HCT116 (cell line): ENCODE measurements at regions of chr1 and their contacts with region 1.

Region 1: DNA sequence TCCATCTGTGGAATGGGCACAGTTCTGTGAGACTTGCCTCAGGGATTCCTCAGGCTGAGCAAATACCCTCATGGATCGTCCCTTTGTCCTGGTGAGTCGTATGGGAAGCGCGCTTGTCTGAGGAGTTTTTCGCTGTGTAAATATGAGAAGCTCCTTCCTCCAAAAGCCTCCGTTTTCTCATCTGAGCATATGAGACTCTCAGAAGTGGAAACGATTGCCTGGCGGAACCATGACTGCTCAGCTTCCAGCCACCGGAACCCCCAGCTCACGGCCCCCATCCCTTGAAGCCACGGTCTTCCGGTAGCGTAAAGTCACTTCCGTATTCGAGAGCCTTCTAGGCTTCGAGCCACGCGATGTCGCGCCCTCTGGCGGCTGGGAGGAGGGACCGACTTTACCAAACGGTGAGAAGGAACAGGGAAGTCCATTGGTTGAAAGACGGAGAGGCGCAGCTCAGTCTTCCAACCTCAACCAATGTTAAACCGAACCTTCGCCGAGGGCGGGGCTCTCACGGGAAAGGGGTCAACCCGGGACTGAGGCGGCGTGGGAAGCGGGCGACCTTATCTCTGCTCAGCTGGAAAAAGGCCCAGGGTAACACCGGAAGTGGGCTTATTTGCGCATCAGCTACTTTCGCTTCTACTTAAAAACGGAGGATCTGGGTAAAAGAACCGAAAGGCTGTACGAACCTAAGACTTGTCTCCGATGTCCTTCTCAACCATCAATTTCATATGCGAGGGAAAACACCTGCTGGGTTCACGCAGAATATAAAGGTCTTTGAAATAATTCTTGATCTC is 46.2 kb downstream of the AZIN2 start:
- DNase-seq: peak; percentile 99
- ATAC-seq: peak; percentile 96
- H3K4me3 ChIP-seq: peak overlapping the region; percentile 78 to 98
- H3K27ac ChIP-seq: peak overlapping the region; percentile 66
- H3K4me1 ChIP-seq: peaks cover 5 to 20% of the 10 kb centered on the region in 2 experiments; a peak in 3 of 4 replicates
- H3K27me3 ChIP-seq: no peaks in the 10 kb centered on the region
- CTCF ChIP-seq: peak; percentile 80 to 94 (median 91)
- POLR2A ChIP-seq: peak; percentile 74
- RAD21 ChIP-seq: peak; percentile 41

Region 2: GRCh38 chr1:33111970-33112369 is 15.2 kb before region 1 on chr1:
- CTCF ChIA-PET with region 1: interaction called, 12 read pairs
- POLR2A ChIA-PET with region 1: interaction called, 5 read pairs
- RAD21 ChIA-PET with region 1: no interaction called
- intact Hi-C with region 1: no loop called
- DNase-seq: no peak
- ATAC-seq: peak; percentile 69
- H3K4me3 ChIP-seq: no peak overlapping the region
- H3K27ac ChIP-seq: no peak overlapping the region
- H3K4me1 ChIP-seq: no peaks in the 10 kb centered on the region
- H3K27me3 ChIP-seq: no peaks in the 10 kb centered on the region
- CTCF ChIP-seq: peak; percentile 28 to 47 (median 35); a peak in 4 of 6 replicates
- POLR2A ChIP-seq: no peak
- RAD21 ChIP-seq: peak; percentile 68

Region 3: GRCh38 chr1:33349778-33350610 is 222.8 kb after region 1 on chr1:
- CTCF ChIA-PET with region 1: no interaction called
- POLR2A ChIA-PET with region 1: no interaction called
- RAD21 ChIA-PET with region 1: no interaction called
- intact Hi-C with region 1: loop called (anchors 10 kb)
- DNase-seq: peak; percentile 68
- ATAC-seq: peak; percentile 81
- H3K4me3 ChIP-seq: peak overlapping the region; percentile 69 to 70
- H3K27ac ChIP-seq: peak overlapping the region; percentile 85
- H3K4me1 ChIP-seq: peaks cover 25 to 48% of the 10 kb centered on the region in 2 experiments
- H3K27me3 ChIP-seq: no peaks in the 10 kb centered on the region
- CTCF ChIP-seq: no peak
- POLR2A ChIP-seq: no peak
- RAD21 ChIP-seq: no peak